ENCODE measurements at regions of chr6 and their contacts with region 1.

Region 1: DNA sequence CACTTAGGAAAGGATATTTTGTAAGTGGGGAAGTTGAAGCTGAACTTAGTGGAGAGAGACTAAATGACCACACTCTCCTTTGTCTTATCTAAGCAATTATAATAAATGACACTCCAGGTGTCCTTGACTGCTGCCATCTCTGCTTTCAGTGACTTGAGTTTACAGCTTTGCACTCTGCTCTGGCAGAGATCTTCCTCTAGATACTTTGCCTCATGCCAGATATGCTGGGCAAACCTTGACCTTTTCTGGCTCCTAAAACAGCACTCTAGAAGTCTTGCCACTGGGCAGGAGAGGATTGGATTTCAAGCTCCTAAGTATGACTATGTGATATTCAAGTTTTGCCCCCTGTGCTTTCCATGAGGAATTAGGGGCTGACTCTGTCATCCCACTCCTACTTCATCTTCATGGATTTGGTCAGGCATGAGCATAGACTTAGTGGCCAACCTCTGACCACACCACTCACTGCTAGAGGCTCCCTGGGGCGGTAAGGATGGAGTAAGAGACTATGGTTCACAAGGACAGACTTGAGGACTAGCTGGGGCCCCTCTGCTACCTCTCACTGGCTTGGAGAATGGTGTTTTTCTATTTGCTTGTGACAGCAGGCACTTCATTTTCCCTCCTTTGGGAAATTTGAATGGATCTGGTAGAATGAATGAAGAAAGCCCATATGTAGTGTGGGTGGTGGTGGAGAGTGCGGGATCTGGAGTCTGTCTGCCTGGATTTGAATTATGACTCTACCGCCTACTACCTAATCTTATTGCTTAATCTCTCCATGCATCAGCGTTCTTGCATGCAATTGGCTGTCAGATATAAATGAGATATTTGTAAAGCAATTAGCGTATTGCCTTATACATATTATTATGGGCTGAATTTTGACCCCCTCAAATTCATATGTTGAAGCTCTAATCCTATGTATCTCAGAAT is 191.4 kb downstream of the REV3L start:
- DNase-seq: no peak
- H3K4me3 ChIP-seq: no peak overlapping the region
- H3K27ac ChIP-seq: no peak overlapping the region
- H3K4me1 ChIP-seq: no peaks in the 10 kb centered on the region
- H3K27me3 ChIP-seq: no peaks in the 10 kb centered on the region
- CTCF ChIP-seq: no peak

Region 2: GRCh38 chr6:110618591-110619267 is 672.9 kb before region 1 on chr6:
- intact Hi-C with region 1: no loop called
- DNase-seq: no peak
- H3K4me3 ChIP-seq: no peak overlapping the region
- H3K27ac ChIP-seq: no peak overlapping the region
- H3K4me1 ChIP-seq: no peaks in the 10 kb centered on the region
- H3K27me3 ChIP-seq: no peaks in the 10 kb centered on the region
- CTCF ChIP-seq: no peak

Region 3: GRCh38 chr6:111113336-111114086 is 178.1 kb before region 1 on chr6:
- intact Hi-C with region 1: loop called (anchors 5 kb)
- DNase-seq: peak in 1 of 2 donors; percentile 37
- H3K4me3 ChIP-seq: no peak overlapping the region
- H3K27ac ChIP-seq: no peak overlapping the region
- H3K4me1 ChIP-seq: no peaks in the 10 kb centered on the region
- H3K27me3 ChIP-seq: no peaks in the 10 kb centered on the region
- CTCF ChIP-seq: no peak

Region 4: GRCh38 chr6:111230351-111231089 is 61.1 kb before region 1 on chr6:
- intact Hi-C with region 1: no loop called
- DNase-seq: no peak
- H3K4me3 ChIP-seq: no peak overlapping the region
- H3K27ac ChIP-seq: no peak overlapping the region
- H3K4me1 ChIP-seq: peaks cover 0 to 21% (median 0%) of the 10 kb centered on the region in 4 donors
- H3K27me3 ChIP-seq: no peaks in the 10 kb centered on the region
- CTCF ChIP-seq: no peak

Measured in tibial artery (tissue), 4 donors.